Activated naive CD4-positive, alpha-beta T cell treated with anti-CD3 and anti-CD28 coated beads, Interleukin-2, amount 10 ng/mL, durations not matched to agents 7 days and 5 days (primary cell): ENCODE measurements at regions of chr3 and their contacts with region 1.

Region 1: DNA sequence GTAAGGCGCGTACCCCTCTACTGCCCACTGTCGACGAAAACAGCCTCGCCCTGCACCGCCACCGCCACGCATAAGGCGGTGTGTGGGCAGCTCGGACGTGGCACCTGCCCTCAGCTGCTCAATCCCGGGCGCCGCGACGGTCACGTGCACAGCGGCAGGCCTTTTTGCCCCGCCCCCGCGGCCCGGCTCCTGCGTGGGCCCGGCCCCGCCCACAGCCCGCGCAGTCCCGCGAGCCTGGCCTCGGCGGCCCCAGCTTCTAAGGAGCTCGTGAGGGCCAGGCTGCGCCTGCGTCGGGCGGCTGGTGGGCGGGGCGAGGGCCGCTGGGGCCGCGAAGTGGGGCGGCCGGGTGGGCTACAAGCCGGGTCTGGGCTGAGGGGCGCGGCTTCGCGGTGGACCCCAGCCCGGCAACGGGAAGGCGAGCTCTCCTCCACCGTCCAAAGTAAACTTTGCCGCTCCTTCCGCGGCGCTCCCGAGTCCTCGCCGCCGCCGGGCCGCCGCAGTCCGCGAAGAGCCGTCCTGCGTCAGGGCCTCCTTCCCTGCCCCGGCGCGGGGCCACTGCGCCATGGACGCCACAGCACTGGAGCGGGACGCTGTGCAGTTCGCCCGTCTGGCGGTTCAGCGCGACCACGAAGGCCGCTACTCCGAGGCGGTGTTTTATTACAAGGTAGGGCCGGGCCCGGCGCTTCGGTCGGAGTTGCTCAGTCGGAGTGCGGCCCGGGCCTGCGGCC is at the start of gene CAPN7:
- DNase-seq: peak; percentile 95
- H3K4me3 Mint-ChIP-seq: peak within 1 kb of the TSS; percentile 78
- H3K27ac Mint-ChIP-seq: peak within 1 kb of the TSS; percentile 90
- H3K4me1 Mint-ChIP-seq: peaks cover 27% of the 10 kb centered on the region
- H3K27me3 Mint-ChIP-seq: peaks cover 9% of the 10 kb centered on the region

Region 2: GRCh38 chr3:15108082-15108545 is 98.0 kb before region 1 on chr3:
- CTCF ChIA-PET with region 1: interaction called, 16 read pairs
- DNase-seq: peak; percentile 84
- H3K4me3 Mint-ChIP-seq: no peak overlapping the region
- H3K27ac Mint-ChIP-seq: no peak overlapping the region
- H3K4me1 Mint-ChIP-seq: peaks cover 4% of the 10 kb centered on the region
- H3K27me3 Mint-ChIP-seq: peaks cover 33% of the 10 kb centered on the region